Breast epithelium (tissue), 4 donors: ENCODE measurements at regions of chr14 and their contacts with region 1.

Region 1: DNA sequence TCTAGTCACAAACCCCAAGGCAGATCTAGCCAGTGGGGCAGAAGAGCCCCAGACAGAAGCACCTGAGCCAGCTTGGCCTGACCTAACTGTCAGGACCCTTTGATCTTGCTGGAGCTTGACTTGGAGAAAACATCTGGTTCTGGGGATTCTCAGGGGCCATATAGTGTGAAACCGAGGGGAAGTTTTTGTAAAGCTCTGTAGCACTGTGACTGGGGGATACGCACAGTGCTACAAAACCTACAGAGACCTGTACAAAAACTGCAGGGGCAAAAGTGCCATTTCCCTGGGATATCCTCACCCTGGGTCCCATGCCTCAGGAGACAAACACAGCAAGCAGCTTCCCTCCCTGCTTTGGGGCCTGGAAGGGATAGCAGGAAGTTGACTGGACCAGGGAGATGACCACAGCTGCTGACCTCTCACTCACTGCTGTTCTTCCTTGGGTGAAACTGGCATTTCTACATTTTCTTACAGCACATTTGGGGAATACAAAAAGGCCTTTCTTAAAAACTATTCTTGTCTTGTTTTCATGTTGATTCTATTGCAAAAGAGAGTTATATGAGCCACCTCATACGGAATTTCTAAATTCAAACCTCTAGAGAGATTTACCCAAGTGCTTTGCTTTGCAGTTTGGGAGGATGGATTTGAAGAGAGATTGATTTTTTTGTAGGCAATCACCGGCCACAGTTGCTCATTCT is 140.0 kb downstream of the DAD1 start:
- DNase-seq: no peak
- H3K4me3 ChIP-seq: no peak overlapping the region
- H3K27ac ChIP-seq: peak overlapping the region in 1 of 2 donors; percentile 60
- H3K4me1 ChIP-seq: no peaks in the 10 kb centered on the region
- H3K27me3 ChIP-seq: no peaks in the 10 kb centered on the region
- CTCF ChIP-seq: no peak
- POLR2A ChIP-seq: no peak

Region 2: DNA sequence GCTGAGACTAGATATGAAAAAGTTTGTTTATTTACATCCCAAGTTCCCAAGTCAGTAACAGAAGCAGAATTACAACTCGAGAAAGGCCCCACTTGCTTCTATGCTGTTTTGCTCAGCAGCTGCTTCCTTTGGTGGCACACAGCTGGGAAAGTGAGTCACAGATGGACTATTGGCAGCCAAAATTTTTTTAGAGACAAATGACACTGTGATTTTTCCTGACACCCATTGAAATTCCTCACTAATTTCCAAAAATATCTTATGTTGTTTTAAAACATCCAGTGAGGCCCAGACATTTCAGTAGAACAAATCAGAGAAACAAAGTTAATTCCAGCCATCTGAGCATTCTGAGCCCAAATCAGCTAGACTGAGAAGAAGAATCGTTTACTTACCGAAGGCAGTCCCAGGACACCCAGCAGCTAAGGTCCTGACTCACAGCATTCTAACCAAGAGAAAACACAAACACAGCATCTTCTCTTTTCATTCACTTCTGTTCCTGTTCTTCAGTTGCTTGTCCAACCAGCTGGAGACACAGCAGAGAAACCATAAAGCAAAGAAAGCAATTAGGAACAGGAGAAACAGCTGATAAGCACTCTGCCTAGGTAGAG is 48.3 kb before region 1 on chr14:
- intact Hi-C with region 1: loop called (anchors 2 kb)
- DNase-seq: no peak
- H3K4me3 ChIP-seq: no peak overlapping the region
- H3K27ac ChIP-seq: peak overlapping the region in 1 of 2 donors; percentile 54
- H3K4me1 ChIP-seq: no peaks in the 10 kb centered on the region
- H3K27me3 ChIP-seq: no peaks in the 10 kb centered on the region
- CTCF ChIP-seq: no peak
- POLR2A ChIP-seq: no peak

Region 3: DNA sequence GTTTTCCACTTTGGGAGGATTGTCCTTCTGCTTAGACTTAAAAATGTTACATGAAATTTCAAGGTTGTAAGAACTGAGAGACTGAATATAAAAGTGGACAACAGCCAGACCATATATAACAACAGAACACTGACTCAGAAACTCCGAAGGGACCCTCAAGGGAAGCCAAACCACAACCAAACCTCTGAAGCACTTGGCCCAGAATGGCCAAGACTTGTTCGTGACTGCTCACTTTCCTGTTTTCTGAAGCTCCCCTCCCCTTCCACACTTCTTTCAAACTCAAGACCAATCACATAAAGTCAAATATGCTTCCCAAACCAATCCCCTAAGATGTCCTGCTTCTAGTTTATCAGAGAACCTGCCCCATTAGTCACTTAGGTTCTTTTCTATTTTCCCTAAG is 181.4 kb after region 1 on chr14:
- intact Hi-C with region 1: no loop called
- DNase-seq: no peak
- H3K4me3 ChIP-seq: no peak overlapping the region
- H3K27ac ChIP-seq: no peak overlapping the region
- H3K4me1 ChIP-seq: no peaks in the 10 kb centered on the region
- H3K27me3 ChIP-seq: no peaks in the 10 kb centered on the region
- CTCF ChIP-seq: no peak
- POLR2A ChIP-seq: no peak

Region 4: GRCh38 chr14:23294734-23295561 is 845.9 kb after region 1 on chr14:
- intact Hi-C with region 1: no loop called
- DNase-seq: peak in 1 of 2 donors; percentile 23
- H3K4me3 ChIP-seq: no peak overlapping the region
- H3K27ac ChIP-seq: peak overlapping the region in 1 of 2 donors; percentile 34
- H3K4me1 ChIP-seq: peaks cover under 1 to 6% of the 10 kb centered on the region in 2 donors
- H3K27me3 ChIP-seq: no peaks in the 10 kb centered on the region
- CTCF ChIP-seq: peak; percentile 58 to 85 (median 67)
- POLR2A ChIP-seq: no peak

Region 5: DNA sequence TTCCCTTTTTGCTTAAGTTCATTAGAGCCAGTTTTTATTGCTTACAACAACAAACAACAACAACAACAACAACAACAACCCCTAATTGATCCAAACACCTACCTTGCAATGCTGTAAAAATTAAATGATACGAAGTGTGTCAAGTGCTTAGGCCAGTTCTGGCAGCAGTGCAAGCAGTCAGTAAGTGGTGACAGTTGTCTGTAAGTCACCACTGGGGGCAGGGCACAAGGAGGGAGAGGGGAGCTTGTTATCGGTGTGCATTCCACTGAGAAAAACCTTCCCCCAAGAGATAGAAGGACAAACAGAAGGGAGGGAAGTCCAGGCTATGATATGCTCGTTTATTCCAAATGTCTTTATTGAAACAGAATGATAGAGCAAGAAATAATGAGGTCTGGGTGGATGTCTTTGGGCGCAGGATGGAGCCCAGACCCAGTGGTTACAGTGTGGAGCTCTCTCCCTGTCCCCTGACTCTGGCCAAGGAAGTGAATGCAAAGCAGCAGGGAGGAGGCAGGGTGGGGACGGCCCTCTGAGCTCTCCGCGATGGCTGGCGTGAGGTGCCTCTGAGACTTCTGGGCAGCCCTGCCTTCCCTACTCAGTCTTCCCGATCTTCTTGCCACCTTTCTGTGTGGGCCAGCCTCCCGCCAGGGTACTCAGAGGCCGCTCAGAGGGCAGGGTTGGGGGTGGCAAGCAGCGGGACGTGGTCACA is 897.1 kb after region 1 on chr14:
- intact Hi-C with region 1: no loop called
- DNase-seq: no peak
- H3K4me3 ChIP-seq: no peak overlapping the region
- H3K27ac ChIP-seq: no peak overlapping the region
- H3K4me1 ChIP-seq: no peaks in the 10 kb centered on the region
- H3K27me3 ChIP-seq: no peaks in the 10 kb centered on the region
- CTCF ChIP-seq: no peak
- POLR2A ChIP-seq: no peak